Left lung (tissue), 14 donors: ENCODE measurements at regions of chr5 and their contacts with region 1.

Region 1: GRCh38 chr5:173615884-173616576 is 420 bp downstream of the BOD1 start:
- DNase-seq: peak in 3 of 4 donors; percentile 61 to 77 (median 63)
- ATAC-seq: peak; percentile 76
- H3K4me3 ChIP-seq: peak overlapping the region; percentile 88 to 94
- H3K27ac ChIP-seq: peak overlapping the region; percentile 88 to 92
- H3K4me1 ChIP-seq: peaks cover 16 to 42% of the 10 kb centered on the region in 2 donors
- H3K27me3 ChIP-seq: no peaks in the 10 kb centered on the region
- CTCF ChIP-seq: peak; percentile 42 to 55

Region 2: DNA sequence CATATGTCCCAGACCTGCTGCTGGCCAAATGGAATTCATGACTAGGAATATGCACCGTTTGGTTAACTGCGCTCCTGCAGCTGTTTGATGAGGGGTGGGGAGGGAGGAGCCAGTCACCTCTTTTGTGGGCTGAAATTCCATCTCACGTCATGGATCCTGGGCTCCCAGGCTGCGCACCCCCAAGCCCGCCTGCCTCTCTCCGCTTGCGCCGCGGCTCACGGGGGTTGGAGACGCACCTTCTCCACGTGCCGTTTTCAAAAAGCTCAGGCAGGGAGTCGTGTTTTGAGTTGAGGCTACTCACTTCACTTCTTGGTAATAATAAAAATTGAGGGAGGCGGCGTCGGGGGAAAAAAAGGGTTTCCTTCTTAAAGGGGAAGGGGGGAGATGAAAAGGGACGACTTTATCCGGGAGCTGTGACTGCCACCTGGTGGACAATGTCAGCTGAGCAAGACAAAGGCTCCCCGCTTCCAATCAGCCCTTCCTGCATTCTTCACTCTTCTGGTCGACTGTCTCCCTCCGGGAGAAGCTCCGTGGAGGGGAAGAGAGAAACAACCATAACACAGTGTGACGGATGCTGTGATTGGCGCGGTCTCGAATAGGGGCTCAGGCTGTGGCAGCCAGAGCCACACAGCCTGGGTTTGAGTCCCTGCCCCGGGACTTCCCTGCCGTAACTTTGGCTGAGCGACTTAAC is 357.0 kb after region 1 on chr5:
- intact Hi-C with region 1: loop called (anchors 2 to 10 kb)
- DNase-seq: peak in 3 of 4 donors; percentile 86 to 90 (median 87)
- ATAC-seq: peak; percentile 94
- H3K4me3 ChIP-seq: peak overlapping the region; percentile 42 to 43
- H3K27ac ChIP-seq: peak overlapping the region in 1 of 2 donors; percentile 13
- H3K4me1 ChIP-seq: peaks cover 0 to 19% of the 10 kb centered on the region in 2 donors
- H3K27me3 ChIP-seq: peaks cover 0 to 4% of the 10 kb centered on the region in 2 donors
- CTCF ChIP-seq: peak; percentile 79 to 93